A549 (cell line): ENCODE measurements at regions of chr2 and their contacts with region 1.

Region 1: GRCh38 chr2:47386551-47386950 is 16.4 kb upstream of the MSH2 start:
- DNase-seq: no peak
- ATAC-seq: no peak
- H3K4me3 ChIP-seq: no peak overlapping the region
- H3K27ac ChIP-seq: no peak overlapping the region
- H3K4me1 ChIP-seq: no peaks in the 10 kb centered on the region
- CTCF ChIP-seq: no peak
- EP300 ChIP-seq: no peak
- POLR2A ChIP-seq: no peak
- RAD21 ChIP-seq: no peak

Region 2: GRCh38 chr2:46847235-46848068 is 539.1 kb before region 1 on chr2:
- CTCF ChIA-PET with region 1: no interaction called
- POLR2A ChIA-PET with region 1: no interaction called
- DNase-seq: peak; percentile 52 to 90
- ATAC-seq: peak; percentile 45 to 68
- H3K4me3 ChIP-seq: no peak overlapping the region
- H3K27ac ChIP-seq: peak overlapping the region; percentile 97 to 99
- H3K4me1 ChIP-seq: peaks cover 66% of the 10 kb centered on the region
- CTCF ChIP-seq: no peak
- EP300 ChIP-seq: peak; percentile 78 to 90; a peak in 4 of 5 replicates
- POLR2A ChIP-seq: no peak
- RAD21 ChIP-seq: peak; percentile 15 to 57; a peak in 4 of 5 replicates

Region 3: GRCh38 chr2:47225061-47225859 is 161.3 kb before region 1 on chr2:
- CTCF ChIA-PET with region 1: no interaction called
- POLR2A ChIA-PET with region 1: no interaction called
- DNase-seq: peak in 1 of 2 experiments; percentile 51
- ATAC-seq: peak; percentile 70 to 72; a peak in 5 of 6 replicates
- H3K4me3 ChIP-seq: no peak overlapping the region
- H3K27ac ChIP-seq: peak overlapping the region; percentile 39 to 66; a peak in 5 of 6 replicates
- H3K4me1 ChIP-seq: peaks cover 26% of the 10 kb centered on the region
- CTCF ChIP-seq: no peak
- EP300 ChIP-seq: no peak; a peak in 1 of 5 replicates
- POLR2A ChIP-seq: no peak
- RAD21 ChIP-seq: 0 out of 5 replicates have a peak, but pooled peaks of 1 of the 2 experiments have one; percentile 8

Region 4: DNA sequence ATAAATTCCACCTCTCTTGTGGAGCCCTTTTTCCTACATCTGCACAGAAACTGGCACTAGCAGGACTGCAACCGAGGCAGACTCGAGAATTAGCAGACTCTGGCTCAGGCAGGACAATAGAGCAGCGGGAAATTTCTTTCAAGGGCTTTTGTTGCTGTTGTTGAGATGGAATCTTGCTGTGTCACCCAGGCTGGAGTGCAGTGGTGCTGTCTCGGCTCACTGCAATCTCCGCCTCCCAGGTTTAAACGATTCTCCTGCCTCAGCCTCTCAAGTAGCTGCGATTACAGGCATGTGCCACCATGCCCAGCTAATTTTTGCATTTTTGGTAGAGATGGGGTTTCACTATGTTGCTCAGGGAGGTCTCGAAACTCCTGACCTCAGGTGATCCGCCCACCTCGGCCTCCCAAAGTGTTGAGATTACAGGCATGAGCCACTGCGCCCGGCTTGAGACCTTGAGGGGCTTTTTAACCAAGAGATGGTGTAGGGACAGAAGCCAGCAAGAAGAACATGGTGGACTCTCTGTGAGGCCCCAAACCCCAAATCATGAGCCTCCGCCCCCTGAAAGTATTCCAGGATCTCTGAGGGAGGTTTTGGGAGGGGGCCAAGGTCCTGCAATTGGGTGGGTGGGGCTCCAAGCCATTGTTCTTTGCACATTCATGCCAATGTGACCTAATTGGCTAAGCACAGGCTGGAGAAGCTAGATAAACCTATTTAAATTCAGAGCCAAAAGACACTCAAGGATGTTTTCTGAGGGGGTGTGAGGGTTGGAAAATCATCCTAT is 52.0 kb before region 1 on chr2:
- CTCF ChIA-PET with region 1: interaction called, 298 read pairs
- POLR2A ChIA-PET with region 1: interaction called, 23 read pairs
- DNase-seq: no peak
- ATAC-seq: peak in 1 of 2 experiments; percentile 32; a peak in 4 of 6 replicates
- H3K4me3 ChIP-seq: no peak overlapping the region
- H3K27ac ChIP-seq: peak overlapping the region in 1 of 2 experiments; percentile 57; a peak in 3 of 6 replicates
- H3K4me1 ChIP-seq: peaks cover 9% of the 10 kb centered on the region; the same call in 2 of the 3 replicates
- CTCF ChIP-seq: no peak
- EP300 ChIP-seq: no peak
- POLR2A ChIP-seq: no peak
- RAD21 ChIP-seq: no peak

Region 5: GRCh38 chr2:47339745-47340541 is 46.6 kb before region 1 on chr2:
- CTCF ChIA-PET with region 1: interaction called, 298 read pairs
- POLR2A ChIA-PET with region 1: interaction called, 23 read pairs
- DNase-seq: peak in 1 of 2 experiments; percentile 59
- ATAC-seq: peak; percentile 15 to 54; a peak in 5 of 6 replicates
- H3K4me3 ChIP-seq: no peak overlapping the region
- H3K27ac ChIP-seq: peak overlapping the region; percentile 12 to 74; a peak in 4 of 6 replicates
- H3K4me1 ChIP-seq: peaks cover 27% of the 10 kb centered on the region
- CTCF ChIP-seq: no peak
- EP300 ChIP-seq: no peak
- POLR2A ChIP-seq: no peak
- RAD21 ChIP-seq: no peak

Region 6: GRCh38 chr2:47344890-47345589 is 41.5 kb before region 1 on chr2:
- CTCF ChIA-PET with region 1: interaction called, 63 read pairs
- POLR2A ChIA-PET with region 1: interaction called, 6 read pairs
- DNase-seq: peak; percentile 99
- ATAC-seq: peak; percentile 99
- H3K4me3 ChIP-seq: peak overlapping the region; percentile 44
- H3K27ac ChIP-seq: peak overlapping the region; percentile 82 to 93
- H3K4me1 ChIP-seq: peaks cover 42% of the 10 kb centered on the region
- CTCF ChIP-seq: no peak
- EP300 ChIP-seq: no peak
- POLR2A ChIP-seq: peak; percentile 37
- RAD21 ChIP-seq: peak in 1 of 2 experiments; percentile 10; a peak in 1 of 5 replicates

Region 7: GRCh38 chr2:47357483-47357882 is 29.1 kb before region 1 on chr2:
- CTCF ChIA-PET with region 1: interaction called, 20 read pairs
- POLR2A ChIA-PET with region 1: no interaction called
- DNase-seq: peak in 1 of 2 experiments; percentile 56
- ATAC-seq: no peak
- H3K4me3 ChIP-seq: no peak overlapping the region
- H3K27ac ChIP-seq: peak overlapping the region; percentile 5 to 65; a peak in 4 of 6 replicates
- H3K4me1 ChIP-seq: peaks cover 57% of the 10 kb centered on the region
- CTCF ChIP-seq: no peak
- EP300 ChIP-seq: no peak
- POLR2A ChIP-seq: no peak
- RAD21 ChIP-seq: no peak

Region 8: DNA sequence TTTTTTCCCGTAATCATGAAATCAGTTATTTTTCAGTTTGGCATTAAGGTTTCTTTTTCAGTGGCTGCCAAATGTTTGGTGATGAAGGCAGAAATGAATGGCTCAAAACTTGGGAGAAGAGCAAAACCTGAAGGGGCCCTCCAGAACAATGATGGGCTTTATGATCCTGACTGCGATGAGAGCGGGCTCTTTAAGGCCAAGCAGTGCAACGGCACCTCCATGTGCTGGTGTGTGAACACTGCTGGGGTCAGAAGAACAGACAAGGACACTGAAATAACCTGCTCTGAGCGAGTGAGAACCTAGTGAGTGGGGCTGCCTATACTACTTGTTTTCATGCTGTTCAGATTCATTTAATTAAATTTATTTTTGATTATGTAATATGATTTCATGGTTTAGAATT is 12.8 kb before region 1 on chr2:
- CTCF ChIA-PET with region 1: interaction called, 31 read pairs
- POLR2A ChIA-PET with region 1: no interaction called
- DNase-seq: peak; percentile 48 to 60
- ATAC-seq: peak; percentile 62 to 77; a peak in 4 of 6 replicates
- H3K4me3 ChIP-seq: no peak overlapping the region
- H3K27ac ChIP-seq: no peak overlapping the region
- H3K4me1 ChIP-seq: peaks cover under 1% of the 10 kb centered on the region; the same call in 1 of the 3 replicates
- CTCF ChIP-seq: peak; percentile 38; the same call in 2 of the 3 replicates
- EP300 ChIP-seq: no peak
- POLR2A ChIP-seq: no peak
- RAD21 ChIP-seq: peak; percentile 59 to 67; a peak in 4 of 5 replicates

Region 9: GRCh38 chr2:47402805-47403608 is 16.5 kb after region 1 on chr2 and contains the start of gene MSH2:
- CTCF ChIA-PET with region 1: interaction called, 26 read pairs
- POLR2A ChIA-PET with region 1: interaction called, 3 read pairs
- DNase-seq: peak; percentile 97 to 100
- ATAC-seq: peak; percentile 97
- H3K4me3 ChIP-seq: peak within 1 kb of the TSS; percentile 83
- H3K27ac ChIP-seq: peak within 1 kb of the TSS; percentile 83 to 93
- H3K4me1 ChIP-seq: peaks cover 11% of the 10 kb centered on the region; the same call in 1 of the 3 replicates
- CTCF ChIP-seq: no peak
- EP300 ChIP-seq: no peak
- POLR2A ChIP-seq: peak; percentile 78
- RAD21 ChIP-seq: no peak
- polyA plus RNA-seq, gene MSH2: 46.2 and 59.0 TPM in 2 replicates

Region 10: GRCh38 chr2:47485751-47486300 is 99.3 kb after region 1 on chr2:
- CTCF ChIA-PET with region 1: no interaction called
- POLR2A ChIA-PET with region 1: no interaction called
- DNase-seq: no peak
- ATAC-seq: no peak
- H3K4me3 ChIP-seq: no peak overlapping the region
- H3K27ac ChIP-seq: no peak overlapping the region
- H3K4me1 ChIP-seq: peaks cover 26% of the 10 kb centered on the region
- CTCF ChIP-seq: no peak
- EP300 ChIP-seq: no peak
- POLR2A ChIP-seq: no peak
- RAD21 ChIP-seq: no peak

Region 11: DNA sequence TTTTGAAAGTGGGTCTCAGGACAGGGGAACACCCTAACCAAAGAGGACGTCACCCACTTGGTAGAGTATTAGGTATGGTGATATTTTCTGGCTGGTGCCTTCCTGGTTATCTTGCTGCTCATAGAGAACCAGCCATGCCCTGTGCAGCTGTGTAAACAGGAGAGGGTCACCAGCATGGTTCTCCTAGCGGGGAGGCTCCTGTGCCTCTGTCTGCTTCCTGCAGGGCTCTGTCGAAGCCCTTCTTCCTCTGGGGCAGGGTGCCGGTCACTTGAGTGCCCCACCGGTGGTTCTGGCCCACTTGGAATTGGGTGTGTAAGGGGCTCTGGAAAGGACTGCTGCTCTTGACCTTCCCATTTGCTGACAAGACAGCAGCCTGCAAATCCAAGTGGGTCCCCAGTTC is 264.7 kb after region 1 on chr2:
- CTCF ChIA-PET with region 1: no interaction called
- POLR2A ChIA-PET with region 1: no interaction called
- DNase-seq: no peak
- ATAC-seq: no peak
- H3K4me3 ChIP-seq: no peak overlapping the region
- H3K27ac ChIP-seq: no peak overlapping the region
- H3K4me1 ChIP-seq: no peaks in the 10 kb centered on the region
- CTCF ChIP-seq: no peak
- EP300 ChIP-seq: no peak
- POLR2A ChIP-seq: no peak
- RAD21 ChIP-seq: no peak